CD4-positive, alpha-beta memory T cell (primary cell): ENCODE measurements at regions of chr2 and their contacts with region 1.

Region 1: DNA sequence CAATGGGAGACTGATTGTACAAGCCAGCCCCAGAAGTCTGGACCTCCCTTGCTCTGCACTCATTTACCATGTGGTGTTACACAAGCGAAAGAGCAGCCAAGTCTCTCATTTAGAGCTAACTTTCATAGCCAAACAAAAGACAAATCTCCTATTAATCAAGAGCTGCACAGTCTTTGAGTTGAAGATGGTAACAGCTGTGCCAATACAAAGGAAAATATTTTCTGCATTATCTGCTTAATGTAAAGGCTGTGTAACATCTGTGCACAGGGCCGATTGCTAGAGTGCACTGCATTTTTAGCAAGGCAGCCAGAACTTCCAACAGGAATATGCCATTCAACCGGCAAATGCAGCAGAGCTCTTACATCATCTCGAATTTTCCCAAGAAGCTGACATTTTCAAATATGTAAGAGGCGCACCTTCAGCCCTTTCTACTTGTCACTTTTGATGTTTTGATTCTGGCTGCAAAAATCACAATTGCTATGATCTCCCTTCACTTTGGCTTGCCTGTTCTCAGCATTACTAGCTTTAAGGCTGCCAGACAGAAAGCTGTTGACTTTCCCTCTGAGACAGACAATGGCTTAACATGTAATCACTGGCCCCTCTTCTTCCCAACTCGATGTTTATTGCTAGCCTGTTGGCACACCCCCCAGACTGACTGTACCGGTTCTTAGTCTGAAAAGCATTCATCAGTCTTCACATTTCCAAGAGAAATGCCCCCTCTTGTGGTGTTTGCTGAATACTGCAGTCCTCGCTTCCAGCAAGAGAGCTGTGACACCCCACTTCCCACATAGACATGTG is 96.9 kb upstream of the TANK start:
- DNase-seq: peak; percentile 56 to 64 (median 61)
- H3K4me3 ChIP-seq: no peak overlapping the region
- H3K4me3 Mint-ChIP-seq: no peak overlapping the region
- H3K27ac ChIP-seq: no peak overlapping the region
- H3K27ac Mint-ChIP-seq: peak overlapping the region in 1 of 7 donors; percentile 48
- H3K4me1 ChIP-seq: no peaks in the 10 kb centered on the region
- H3K4me1 Mint-ChIP-seq: peaks cover 3 to 6% (median 4%) of the 10 kb centered on the region in 4 donors
- H3K27me3 ChIP-seq: no peaks in the 10 kb centered on the region
- H3K27me3 Mint-ChIP-seq: peaks cover 0 to 2% of the 10 kb centered on the region in 2 donors

Region 2: GRCh38 chr2:160324161-160324800 is 739.1 kb before region 1 on chr2:
- CTCF ChIA-PET with region 1: interaction called, 12 read pairs
- POLR2A ChIA-PET with region 1: no interaction called
- intact Hi-C with region 1: no loop called
- DNase-seq: peak in 4 of 5 donors; percentile 21 to 36 (median 28)
- H3K4me3 ChIP-seq: no peak overlapping the region
- H3K4me3 Mint-ChIP-seq: peak overlapping the region in 3 of 8 donors; percentile 8 to 32 (median 18)
- H3K27ac ChIP-seq: no peak overlapping the region
- H3K27ac Mint-ChIP-seq: peak overlapping the region in 2 of 7 donors; percentile 33 to 51
- H3K4me1 ChIP-seq: peaks cover 66% of the 10 kb centered on the region
- H3K4me1 Mint-ChIP-seq: peaks cover 63 to 95% (median 82%) of the 10 kb centered on the region in 4 donors
- H3K27me3 ChIP-seq: no peaks in the 10 kb centered on the region
- H3K27me3 Mint-ChIP-seq: no peaks in the 10 kb centered on the region

Region 3: GRCh38 chr2:160375802-160376469 is 687.4 kb before region 1 on chr2:
- CTCF ChIA-PET with region 1: no interaction called
- POLR2A ChIA-PET with region 1: no interaction called
- intact Hi-C with region 1: no loop called
- DNase-seq: peak in 2 of 5 donors; percentile 10 to 14
- H3K4me3 ChIP-seq: no peak overlapping the region
- H3K4me3 Mint-ChIP-seq: peak overlapping the region in 5 of 8 donors; percentile 9 to 64 (median 26)
- H3K27ac ChIP-seq: no peak overlapping the region
- H3K27ac Mint-ChIP-seq: peak overlapping the region in 3 of 7 donors; percentile 10 to 13 (median 10)
- H3K4me1 ChIP-seq: peaks cover 86% of the 10 kb centered on the region
- H3K4me1 Mint-ChIP-seq: peaks cover 70 to 96% (median 86%) of the 10 kb centered on the region in 4 donors
- H3K27me3 ChIP-seq: no peaks in the 10 kb centered on the region
- H3K27me3 Mint-ChIP-seq: no peaks in the 10 kb centered on the region

Region 4: DNA sequence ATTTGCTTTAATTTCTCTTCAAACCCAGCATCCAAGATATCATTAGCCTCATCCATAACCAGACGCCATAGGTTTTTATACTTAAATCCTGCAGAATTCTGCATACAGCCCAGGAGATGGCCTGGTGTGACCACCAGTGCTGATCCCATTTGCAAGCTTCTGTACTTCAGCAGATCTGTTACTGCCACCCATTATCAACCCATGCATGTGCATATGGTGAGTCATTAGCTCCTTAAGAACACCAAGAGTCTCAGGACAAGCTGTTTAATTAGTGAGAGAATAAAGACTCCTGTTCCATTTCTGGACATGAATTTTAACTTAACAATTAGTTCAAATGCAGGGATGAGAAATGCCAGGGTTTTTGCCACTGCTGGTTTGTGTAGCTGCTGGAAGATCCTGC is 13.8 kb before region 1 on chr2:
- CTCF ChIA-PET with region 1: interaction called, 40 read pairs
- POLR2A ChIA-PET with region 1: no interaction called
- intact Hi-C with region 1: no loop called
- DNase-seq: no peak
- H3K4me3 ChIP-seq: no peak overlapping the region
- H3K4me3 Mint-ChIP-seq: no peak overlapping the region
- H3K27ac ChIP-seq: no peak overlapping the region
- H3K27ac Mint-ChIP-seq: no peak overlapping the region
- H3K4me1 ChIP-seq: no peaks in the 10 kb centered on the region
- H3K4me1 Mint-ChIP-seq: no peaks in the 10 kb centered on the region
- H3K27me3 ChIP-seq: peaks cover 3% of the 10 kb centered on the region
- H3K27me3 Mint-ChIP-seq: peaks cover 31 to 32% of the 10 kb centered on the region in 2 donors

Region 5: GRCh38 chr2:161100211-161100895 is 37.0 kb after region 1 on chr2:
- CTCF ChIA-PET with region 1: interaction called, 11 read pairs
- POLR2A ChIA-PET with region 1: no interaction called
- intact Hi-C with region 1: no loop called
- DNase-seq: no peak
- H3K4me3 ChIP-seq: no peak overlapping the region
- H3K4me3 Mint-ChIP-seq: no peak overlapping the region
- H3K27ac ChIP-seq: no peak overlapping the region
- H3K27ac Mint-ChIP-seq: no peak overlapping the region
- H3K4me1 ChIP-seq: peaks cover 4% of the 10 kb centered on the region
- H3K4me1 Mint-ChIP-seq: peaks cover 5 to 6% (median 6%) of the 10 kb centered on the region in 4 donors
- H3K27me3 ChIP-seq: no peaks in the 10 kb centered on the region
- H3K27me3 Mint-ChIP-seq: peaks cover 2 to 3% of the 10 kb centered on the region in 2 donors

Region 6: DNA sequence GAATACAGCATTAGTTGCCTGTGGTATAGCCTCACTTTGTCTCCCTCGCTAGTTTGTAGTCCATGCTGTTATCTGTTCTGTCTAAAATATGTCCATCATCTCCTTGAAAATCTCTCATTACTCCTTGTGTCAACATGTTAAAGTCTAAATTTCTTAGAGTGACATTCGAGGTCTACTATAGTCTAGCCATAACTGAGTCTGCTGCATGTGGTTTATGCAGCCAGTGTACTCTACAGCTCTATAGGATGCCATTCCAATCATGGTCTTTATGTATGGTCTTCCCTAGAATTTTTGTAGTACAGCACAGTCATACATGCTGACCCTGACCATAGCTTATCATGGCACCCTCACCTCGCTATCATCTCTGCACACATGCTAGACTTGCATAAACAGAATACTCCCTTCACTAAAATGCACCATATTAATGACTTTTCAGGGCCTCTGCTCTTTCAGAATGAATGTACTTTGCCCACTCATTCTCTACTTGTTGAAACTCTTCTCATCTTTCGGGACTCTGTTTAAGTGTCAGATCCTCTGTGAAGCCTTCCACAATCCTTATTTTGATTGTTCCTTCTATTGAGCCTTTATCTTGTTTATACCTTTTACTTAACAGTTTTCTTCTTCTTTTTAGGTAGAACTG is 109.7 kb after region 1 on chr2:
- CTCF ChIA-PET with region 1: interaction called, 10 read pairs
- POLR2A ChIA-PET with region 1: no interaction called
- intact Hi-C with region 1: no loop called
- DNase-seq: no peak
- H3K4me3 ChIP-seq: no peak overlapping the region
- H3K4me3 Mint-ChIP-seq: peak overlapping the region in 2 of 8 donors; percentile 1 to 39
- H3K27ac ChIP-seq: no peak overlapping the region
- H3K27ac Mint-ChIP-seq: peak overlapping the region in 6 of 7 donors; percentile 0 to 61 (median 6)
- H3K4me1 ChIP-seq: peaks cover 67% of the 10 kb centered on the region
- H3K4me1 Mint-ChIP-seq: peaks cover 50 to 73% (median 61%) of the 10 kb centered on the region in 4 donors
- H3K27me3 ChIP-seq: no peaks in the 10 kb centered on the region
- H3K27me3 Mint-ChIP-seq: no peaks in the 10 kb centered on the region